ENCODE measurements at regions of chr6 and their contacts with region 1.

Region 1: DNA sequence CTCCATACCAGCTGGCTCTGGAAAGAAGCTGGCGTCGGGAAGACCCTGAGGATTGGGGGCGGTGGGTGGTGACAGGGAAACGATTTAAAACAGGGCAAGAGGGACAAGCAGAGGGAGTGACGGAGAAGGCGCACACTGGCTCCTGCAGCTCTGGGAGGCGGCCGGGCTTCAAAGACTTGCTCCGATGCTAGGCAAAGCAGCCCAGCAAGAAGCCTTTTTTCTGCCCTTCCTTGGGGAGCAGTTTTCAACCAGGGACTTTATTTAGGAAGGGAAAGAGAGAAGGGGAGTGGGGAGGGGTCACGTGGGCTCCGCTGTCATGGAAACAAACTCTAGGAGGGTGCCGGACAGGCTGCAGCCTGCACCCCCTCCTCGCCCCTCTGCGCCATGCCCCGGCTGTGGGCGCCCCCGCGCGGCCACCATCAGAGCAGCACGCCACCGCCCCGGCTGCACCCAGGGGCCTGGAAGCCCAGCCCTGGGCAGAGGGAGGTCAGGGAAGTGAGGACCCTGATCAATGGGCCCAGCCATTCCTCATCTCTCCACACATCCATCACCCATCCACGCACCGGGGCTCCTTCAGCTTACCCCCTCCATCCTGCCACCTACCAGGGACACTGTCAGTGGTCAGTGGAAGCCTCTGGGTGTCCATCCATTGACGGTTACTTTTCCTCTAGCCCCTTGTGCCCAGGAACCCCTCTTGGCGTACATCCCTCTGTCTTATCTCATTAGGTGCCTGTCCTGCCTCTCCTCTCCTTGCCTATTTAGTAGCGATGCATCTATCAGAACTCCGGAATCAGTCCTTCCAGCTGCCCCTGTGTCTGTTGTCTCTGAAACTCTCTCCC is 66.6 kb upstream of the CCDC167 start:
- DNase-seq: peak; percentile 77
- ATAC-seq: peak; percentile 99
- H3K4me3 Mint-ChIP-seq: peak overlapping the region; percentile 45
- H3K27ac Mint-ChIP-seq: no peak overlapping the region
- H3K4me1 Mint-ChIP-seq: peaks cover 3% of the 10 kb centered on the region
- H3K27me3 Mint-ChIP-seq: peaks cover 2% of the 10 kb centered on the region
- CTCF ChIP-seq: peak; percentile 95

Region 2: GRCh38 chr6:37477656-37478435 is 88.5 kb before region 1 on chr6:
- CTCF ChIA-PET with region 1: interaction called, 14 read pairs
- POLR2A ChIA-PET with region 1: interaction called, 3 read pairs
- intact Hi-C with region 1: loop called (anchors 2 kb)
- DNase-seq: no peak
- ATAC-seq: no peak
- H3K4me3 Mint-ChIP-seq: no peak overlapping the region
- H3K27ac Mint-ChIP-seq: no peak overlapping the region
- H3K4me1 Mint-ChIP-seq: no peaks in the 10 kb centered on the region
- H3K27me3 Mint-ChIP-seq: no peaks in the 10 kb centered on the region
- CTCF ChIP-seq: no peak

Region 3: DNA sequence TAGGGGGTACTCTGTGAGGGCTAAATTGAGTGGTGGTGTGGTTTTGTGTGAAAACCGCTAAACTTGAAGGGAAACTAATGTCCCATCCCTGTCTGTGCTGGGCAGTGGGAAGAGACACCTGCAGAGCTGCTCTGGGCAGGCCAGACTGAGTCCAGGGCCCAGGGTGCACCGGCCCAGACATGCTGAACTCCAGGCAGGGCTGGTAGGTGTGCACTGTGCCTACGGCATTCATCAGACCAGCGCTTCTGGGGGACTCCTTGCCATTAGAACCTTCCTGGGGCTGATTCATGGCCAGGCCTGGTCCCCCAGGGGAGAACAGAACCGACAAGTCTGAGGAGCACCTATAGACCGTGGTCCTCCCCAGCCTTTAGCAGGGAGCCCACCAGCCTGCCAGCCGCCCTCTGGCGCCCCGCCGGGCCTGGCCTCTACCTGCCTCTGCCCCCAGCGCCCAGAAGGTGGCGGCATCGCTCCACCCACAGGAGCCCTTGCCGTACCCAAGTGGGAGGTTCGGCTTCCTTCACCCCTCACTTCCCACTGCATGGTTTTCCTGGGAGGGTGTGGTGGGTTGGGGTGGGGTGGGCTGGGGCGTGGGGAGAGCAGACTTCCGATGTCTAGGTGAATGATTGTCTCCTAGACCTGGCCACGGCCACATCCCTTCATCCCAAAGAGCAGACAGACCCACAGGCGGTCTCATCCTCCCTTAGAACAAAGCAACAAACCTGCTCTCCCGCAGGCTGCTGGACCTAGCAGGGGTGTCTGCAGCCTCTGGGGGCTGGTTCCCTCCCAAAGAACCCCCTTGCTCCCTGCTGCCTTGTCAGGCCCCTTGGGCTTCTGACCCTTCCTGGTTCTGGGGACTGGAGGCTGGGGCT is 82.2 kb before region 1 on chr6:
- CTCF ChIA-PET with region 1: interaction called, 53 read pairs
- POLR2A ChIA-PET with region 1: interaction called, 5 read pairs
- intact Hi-C with region 1: loop called (anchors 2 kb)
- DNase-seq: peak; percentile 79
- ATAC-seq: peak; percentile 88
- H3K4me3 Mint-ChIP-seq: no peak overlapping the region
- H3K27ac Mint-ChIP-seq: no peak overlapping the region
- H3K4me1 Mint-ChIP-seq: peaks cover 17% of the 10 kb centered on the region
- H3K27me3 Mint-ChIP-seq: no peaks in the 10 kb centered on the region
- CTCF ChIP-seq: peak; percentile 85

Region 4: DNA sequence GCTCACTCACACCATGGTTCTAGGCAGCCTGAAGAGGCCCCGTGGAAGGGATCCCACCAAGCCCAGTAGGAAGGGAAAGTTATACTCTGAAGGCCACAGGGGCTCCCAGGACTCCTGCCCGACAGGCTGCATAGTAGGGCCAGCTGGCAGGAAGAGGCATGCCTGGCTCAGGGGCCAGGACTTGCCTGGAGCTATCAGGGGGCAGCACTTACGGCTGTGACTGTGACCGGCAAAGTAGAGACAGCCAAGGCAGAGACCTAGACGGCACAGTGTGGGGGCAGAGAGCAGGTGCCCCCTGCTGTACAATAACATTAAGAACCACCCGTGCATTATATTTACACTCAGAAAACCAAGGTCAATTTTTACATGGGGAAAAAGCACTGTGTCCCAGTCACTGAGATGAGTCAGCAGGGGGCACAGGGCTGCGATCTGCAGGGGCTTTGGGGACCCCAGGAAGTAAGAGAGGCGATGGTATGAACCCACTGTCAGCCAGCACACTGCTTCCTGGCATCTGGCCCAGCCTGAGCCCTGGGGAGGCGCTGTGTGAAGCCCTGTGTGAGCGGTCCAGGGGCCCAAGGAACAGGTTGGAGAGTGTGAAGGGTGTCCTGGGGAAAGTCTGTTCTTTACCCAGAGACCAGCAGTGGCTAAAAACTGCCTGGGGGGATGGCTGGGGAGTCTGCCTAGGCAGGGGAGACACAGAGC is 76.5 kb before region 1 on chr6:
- CTCF ChIA-PET with region 1: interaction called, 53 read pairs
- POLR2A ChIA-PET with region 1: interaction called, 7 read pairs
- intact Hi-C with region 1: no loop called
- DNase-seq: peak; percentile 55
- ATAC-seq: peak; percentile 69
- H3K4me3 Mint-ChIP-seq: peak overlapping the region; percentile 17
- H3K27ac Mint-ChIP-seq: peak overlapping the region; percentile 90
- H3K4me1 Mint-ChIP-seq: peaks cover 68% of the 10 kb centered on the region
- H3K27me3 Mint-ChIP-seq: no peaks in the 10 kb centered on the region
- CTCF ChIP-seq: peak; percentile 51

Region 5: DNA sequence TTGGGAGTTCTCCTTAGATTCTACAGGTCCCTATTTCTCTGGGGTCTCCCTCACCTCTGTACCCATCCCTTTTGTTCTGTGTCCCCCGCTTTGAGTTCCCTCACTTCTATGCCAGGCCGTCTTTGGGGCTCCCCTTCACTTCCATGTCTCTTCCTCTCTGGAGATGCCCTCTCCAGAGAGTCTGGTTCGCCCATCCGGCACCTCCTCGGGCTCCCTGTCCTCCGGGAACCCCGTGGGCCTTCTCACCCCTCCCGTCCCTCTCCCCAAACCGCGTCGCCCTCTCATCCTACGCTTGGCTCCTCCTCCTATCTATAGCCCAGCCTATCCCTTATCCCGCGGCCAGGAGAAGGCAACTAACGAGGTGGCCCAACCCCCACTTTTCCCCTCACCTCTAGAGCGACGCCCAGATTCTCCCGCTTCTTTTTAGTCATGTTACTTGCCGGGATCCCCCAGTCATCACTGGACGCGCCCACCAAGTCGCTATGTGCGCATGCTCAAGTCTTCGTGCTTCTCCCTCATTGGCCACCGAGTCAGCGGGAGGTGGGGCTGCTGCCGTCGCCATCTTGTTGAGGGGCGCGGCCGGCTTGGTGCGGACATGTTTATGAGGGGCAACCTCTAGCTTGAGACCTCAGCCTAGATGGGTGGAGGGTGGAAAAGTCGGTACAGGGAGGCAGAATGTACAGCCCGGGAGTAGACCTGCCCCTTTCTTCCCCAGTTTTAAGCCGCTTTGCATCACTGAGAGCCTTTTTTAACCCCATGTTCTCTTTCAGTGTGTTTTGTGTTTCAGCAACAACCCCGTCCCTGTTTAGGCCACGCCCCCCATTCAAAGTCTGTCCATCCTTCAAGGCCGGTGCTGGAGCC is 66.7 kb before region 1 on chr6 and contains the start of gene CCDC167:
- CTCF ChIA-PET with region 1: interaction called, 11 read pairs
- POLR2A ChIA-PET with region 1: interaction called, 7 read pairs
- intact Hi-C with region 1: no loop called
- DNase-seq: peak; percentile 99
- ATAC-seq: peak; percentile 86
- H3K4me3 Mint-ChIP-seq: peak within 1 kb of the TSS; percentile 92
- H3K27ac Mint-ChIP-seq: peak within 1 kb of the TSS; percentile 99
- H3K4me1 Mint-ChIP-seq: peaks cover 87% of the 10 kb centered on the region
- H3K27me3 Mint-ChIP-seq: no peaks in the 10 kb centered on the region
- CTCF ChIP-seq: no peak
- total RNA-seq, gene CCDC167: 63.7 to 68.1 TPM

Region 6: DNA sequence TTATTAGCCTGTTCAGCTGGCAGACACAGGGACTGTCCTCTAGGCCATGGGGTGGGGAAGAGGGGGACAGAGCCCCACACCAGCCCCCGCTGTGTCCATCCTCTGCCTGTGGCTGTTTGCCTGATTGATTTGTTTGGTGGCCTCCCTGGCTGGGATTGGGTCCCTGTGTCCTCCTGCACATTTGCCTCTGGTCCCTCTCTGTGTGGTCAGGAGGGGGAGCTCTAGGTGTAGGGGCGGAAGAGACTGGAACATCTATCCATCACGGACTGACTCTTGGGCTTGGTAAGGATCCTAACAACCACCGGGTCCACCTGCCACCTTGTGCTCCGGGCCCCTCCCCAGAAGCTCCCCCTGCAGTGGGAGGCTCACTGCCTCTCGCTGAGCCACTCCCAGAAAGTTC is 28.2 kb before region 1 on chr6:
- CTCF ChIA-PET with region 1: interaction called, 32 read pairs
- POLR2A ChIA-PET with region 1: no interaction called
- intact Hi-C with region 1: no loop called
- DNase-seq: no peak
- ATAC-seq: no peak
- H3K4me3 Mint-ChIP-seq: no peak overlapping the region
- H3K27ac Mint-ChIP-seq: no peak overlapping the region
- H3K4me1 Mint-ChIP-seq: peaks cover 35% of the 10 kb centered on the region
- H3K27me3 Mint-ChIP-seq: no peaks in the 10 kb centered on the region
- CTCF ChIP-seq: no peak

Region 7: GRCh38 chr6:37554480-37554819 is 11.9 kb before region 1 on chr6:
- CTCF ChIA-PET with region 1: interaction called, 22 read pairs
- POLR2A ChIA-PET with region 1: interaction called, 3 read pairs
- intact Hi-C with region 1: no loop called
- DNase-seq: no peak
- ATAC-seq: no peak
- H3K4me3 Mint-ChIP-seq: no peak overlapping the region
- H3K27ac Mint-ChIP-seq: peak overlapping the region; percentile 40
- H3K4me1 Mint-ChIP-seq: peaks cover 30% of the 10 kb centered on the region
- H3K27me3 Mint-ChIP-seq: no peaks in the 10 kb centered on the region
- CTCF ChIP-seq: no peak